ENCODE measurements at regions of chr5 and their contacts with region 1.

Region 1: DNA sequence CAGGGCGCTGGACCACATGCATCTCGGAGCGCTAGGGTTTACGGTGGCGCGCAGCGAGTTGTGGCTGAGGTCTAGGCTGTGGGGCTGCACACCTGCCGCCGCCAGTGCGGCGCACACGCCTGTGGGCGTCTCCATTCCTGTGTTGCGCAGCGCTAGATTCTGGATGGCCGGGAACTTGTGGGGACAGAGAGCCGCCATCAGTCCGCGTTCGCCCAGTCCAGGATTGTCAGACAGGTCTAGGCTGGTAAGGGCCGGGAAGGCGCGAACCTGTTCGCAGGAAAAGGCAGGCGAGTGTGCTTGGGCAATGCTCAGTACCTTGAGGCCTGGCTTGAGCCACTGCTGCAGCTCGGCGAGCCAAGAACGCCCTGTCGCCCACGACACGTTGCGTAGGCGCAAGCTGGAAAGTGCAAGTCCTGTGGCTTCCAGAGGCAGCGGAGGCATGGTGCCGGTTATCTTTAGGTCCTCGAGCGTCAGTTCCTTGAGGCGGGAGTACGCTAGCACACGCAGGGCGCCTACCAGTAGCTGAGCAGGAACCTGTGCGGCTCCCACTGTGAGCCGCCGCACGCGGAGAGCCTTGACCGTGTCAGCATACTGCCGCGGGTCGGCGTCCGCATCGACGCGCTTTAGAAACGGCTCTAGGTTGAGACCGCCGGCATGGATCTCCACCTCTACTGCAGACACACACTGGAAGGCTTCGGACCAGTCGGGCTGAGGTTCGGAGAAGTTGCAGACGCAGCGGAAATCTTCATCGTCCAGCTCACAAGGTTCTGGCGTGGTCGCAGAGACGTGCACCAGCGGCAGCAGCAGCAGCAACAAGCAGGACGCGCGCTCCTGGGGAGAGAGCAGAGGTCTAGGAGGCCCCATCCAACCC is 590 bp downstream of the CD14 start:
- DNase-seq: peak in 2 of 3 donors; percentile 50 to 55
- H3K4me3 ChIP-seq: peak overlapping the region; percentile 76 to 98 (median 97)
- H3K4me3 Mint-ChIP-seq: peak overlapping the region; percentile 92 to 100
- H3K27ac ChIP-seq: peak overlapping the region; percentile 96 to 97
- H3K27ac Mint-ChIP-seq: peak overlapping the region; percentile 97 to 99 (median 98)
- H3K4me1 ChIP-seq: peaks cover 32 to 68% of the 10 kb centered on the region in 2 donors
- H3K4me1 Mint-ChIP-seq: peaks cover 56% of the 10 kb centered on the region
- H3K27me3 ChIP-seq: no peaks in the 10 kb centered on the region
- H3K27me3 Mint-ChIP-seq: peaks cover 0 to 5% (median 0%) of the 10 kb centered on the region in 3 donors
- CTCF ChIP-seq: peak; percentile 1

Region 2: DNA sequence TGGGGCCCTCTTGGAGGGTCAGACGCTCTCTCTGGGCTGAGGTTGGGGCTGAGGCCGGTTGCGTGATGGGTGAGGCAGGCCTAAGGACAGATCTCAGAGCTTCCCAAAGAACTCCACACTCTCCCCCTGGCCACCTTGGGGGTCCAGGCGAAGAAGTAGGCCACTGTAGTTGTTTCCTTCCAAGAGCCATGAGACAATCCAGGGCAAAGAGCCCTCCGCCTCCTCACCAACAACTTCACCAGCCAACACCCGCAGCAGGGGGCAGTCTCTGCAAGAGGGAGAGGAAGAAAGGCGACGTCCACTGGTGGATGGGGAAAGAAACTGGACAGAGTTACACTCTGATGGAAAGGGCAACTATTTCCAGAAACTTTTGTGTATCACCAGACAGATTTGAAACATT is 57.1 kb before region 1 on chr5:
- intact Hi-C with region 1: loop called (anchors 2 kb)
- DNase-seq: peak; percentile 71 to 82 (median 71)
- H3K4me3 ChIP-seq: no peak overlapping the region
- H3K4me3 Mint-ChIP-seq: no peak overlapping the region
- H3K27ac ChIP-seq: peak overlapping the region in 1 of 2 donors; percentile 39
- H3K27ac Mint-ChIP-seq: peak overlapping the region in 6 of 7 donors; percentile 14 to 87 (median 66)
- H3K4me1 ChIP-seq: peaks cover 22 to 42% of the 10 kb centered on the region in 2 donors
- H3K4me1 Mint-ChIP-seq: peaks cover 35% of the 10 kb centered on the region
- H3K27me3 ChIP-seq: no peaks in the 10 kb centered on the region
- H3K27me3 Mint-ChIP-seq: peaks cover 0 to 2% (median 2%) of the 10 kb centered on the region in 3 donors
- CTCF ChIP-seq: peak; percentile 84

Region 3: DNA sequence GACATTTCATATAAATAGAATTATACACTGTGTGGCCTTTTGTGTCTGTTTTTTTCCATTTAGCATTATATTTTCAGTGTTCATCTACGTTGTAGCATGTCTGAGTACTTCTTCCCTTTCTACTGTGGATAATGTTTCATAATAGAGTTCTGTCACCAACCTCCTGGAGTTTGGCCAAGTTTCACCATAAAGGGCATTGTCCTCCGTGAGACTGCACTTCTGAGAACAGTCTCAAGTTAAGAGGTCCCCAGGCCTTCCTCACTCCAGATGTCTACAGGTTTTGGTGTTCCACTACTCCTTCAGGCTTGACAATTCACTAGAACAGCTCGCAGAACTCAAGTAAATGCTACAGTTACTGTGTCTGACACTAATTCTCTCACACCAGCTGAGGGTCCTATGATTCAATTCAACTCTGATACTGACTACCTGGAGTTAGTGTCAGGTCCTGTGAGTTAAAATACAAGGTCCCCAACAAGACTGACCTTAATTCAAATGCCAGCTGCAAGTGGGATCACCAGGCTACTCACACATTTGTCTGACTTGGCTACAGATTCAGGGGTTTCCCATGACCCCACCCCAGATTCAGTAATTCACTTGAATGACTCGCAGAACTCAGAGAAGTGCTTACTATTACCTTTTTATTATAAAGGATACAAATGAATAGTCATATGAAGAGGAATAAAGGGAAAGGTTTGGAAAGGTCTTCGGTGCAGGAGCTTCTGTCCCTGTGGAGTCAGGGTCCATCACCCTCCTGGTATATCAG is 36.7 kb before region 1 on chr5:
- intact Hi-C with region 1: loop called (anchors 5 kb)
- DNase-seq: peak; percentile 92 to 97 (median 95)
- H3K4me3 ChIP-seq: peak overlapping the region in 1 of 3 experiments; percentile 52
- H3K4me3 Mint-ChIP-seq: peak overlapping the region; percentile 49 to 72
- H3K27ac ChIP-seq: peak overlapping the region; percentile 96 to 97
- H3K27ac Mint-ChIP-seq: peak overlapping the region; percentile 95 to 99 (median 97)
- H3K4me1 ChIP-seq: peaks cover 74 to 89% of the 10 kb centered on the region in 2 donors
- H3K4me1 Mint-ChIP-seq: peaks cover 72% of the 10 kb centered on the region
- H3K27me3 ChIP-seq: no peaks in the 10 kb centered on the region
- H3K27me3 Mint-ChIP-seq: no peaks in the 10 kb centered on the region
- CTCF ChIP-seq: no peak

Region 4: DNA sequence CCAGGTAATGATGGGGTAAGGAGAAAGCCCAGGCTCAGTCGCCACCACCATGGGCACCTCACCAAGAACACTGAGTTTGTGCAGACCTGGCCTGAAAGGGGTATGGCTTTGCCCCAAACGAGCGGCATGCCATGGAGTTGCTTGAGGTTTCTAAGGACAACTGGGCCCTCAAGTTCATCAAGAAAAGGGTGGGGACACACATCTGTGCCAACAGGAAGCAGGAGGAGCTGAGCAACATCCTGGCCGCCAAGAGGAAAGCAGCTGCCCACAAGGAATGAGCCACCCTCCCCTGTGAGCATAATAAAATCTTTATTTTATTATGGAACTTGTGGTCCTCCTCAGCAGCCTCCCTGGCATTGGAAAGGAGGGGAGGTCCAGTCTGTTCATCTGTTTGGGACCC is 23.3 kb before region 1 on chr5:
- intact Hi-C with region 1: loop called in 1 of 2 experiments (anchors 2 kb)
- DNase-seq: peak; percentile 77 to 88 (median 87)
- H3K4me3 ChIP-seq: peak overlapping the region; percentile 8 to 65 (median 12)
- H3K4me3 Mint-ChIP-seq: peak overlapping the region; percentile 51 to 78
- H3K27ac ChIP-seq: peak overlapping the region; percentile 94 to 96
- H3K27ac Mint-ChIP-seq: peak overlapping the region; percentile 90 to 100 (median 98)
- H3K4me1 ChIP-seq: peaks cover 86 to 98% of the 10 kb centered on the region in 2 donors
- H3K4me1 Mint-ChIP-seq: peaks cover 86% of the 10 kb centered on the region
- H3K27me3 ChIP-seq: no peaks in the 10 kb centered on the region
- H3K27me3 Mint-ChIP-seq: no peaks in the 10 kb centered on the region
- CTCF ChIP-seq: no peak

Region 5: GRCh38 chr5:140883927-140884697 is 251.7 kb after region 1 on chr5:
- intact Hi-C with region 1: no loop called
- DNase-seq: no peak
- H3K4me3 ChIP-seq: no peak overlapping the region
- H3K4me3 Mint-ChIP-seq: no peak overlapping the region
- H3K27ac ChIP-seq: no peak overlapping the region
- H3K27ac Mint-ChIP-seq: no peak overlapping the region
- H3K4me1 ChIP-seq: no peaks in the 10 kb centered on the region
- H3K4me1 Mint-ChIP-seq: no peaks in the 10 kb centered on the region
- H3K27me3 ChIP-seq: peaks cover 0 to 18% of the 10 kb centered on the region in 2 donors
- H3K27me3 Mint-ChIP-seq: peaks cover 2 to 32% (median 19%) of the 10 kb centered on the region in 3 donors
- CTCF ChIP-seq: no peak

Region 6: GRCh38 chr5:141050622-141051525 is 418.5 kb after region 1 on chr5 and contains the start of gene PCDHB1:
- intact Hi-C with region 1: no loop called
- DNase-seq: no peak
- H3K4me3 ChIP-seq: no peak within 1 kb of the TSS
- H3K4me3 Mint-ChIP-seq: peak within 1 kb of the TSS in 1 of 2 donors; percentile 71
- H3K27ac ChIP-seq: no peak within 1 kb of the TSS
- H3K27ac Mint-ChIP-seq: no peak within 1 kb of the TSS
- H3K4me1 ChIP-seq: no peaks in the 10 kb centered on the region
- H3K4me1 Mint-ChIP-seq: no peaks in the 10 kb centered on the region
- H3K27me3 ChIP-seq: peaks cover 3 to 14% of the 10 kb centered on the region in 2 donors
- H3K27me3 Mint-ChIP-seq: peaks cover 9 to 17% (median 15%) of the 10 kb centered on the region in 3 donors
- CTCF ChIP-seq: no peak
- polyA plus RNA-seq, gene PCDHB1: not detected